B cell (primary cell): ENCODE measurements at regions of chr7 and their contacts with region 1.

Region 1: GRCh38 chr7:142782922-142783900 is 12.4 kb downstream of the PRSS2 start:
- DNase-seq: peak; percentile 93
- ATAC-seq: peak; percentile 90
- H3K4me3 ChIP-seq: peak overlapping the region; percentile 28 to 76 (median 56)
- H3K4me3 Mint-ChIP-seq: peak overlapping the region; percentile 81
- H3K27ac ChIP-seq: peak overlapping the region; percentile 27 to 56
- H3K27ac Mint-ChIP-seq: peak overlapping the region; percentile 92
- H3K4me1 ChIP-seq: peaks cover 14 to 25% of the 10 kb centered on the region in 2 donors
- H3K4me1 Mint-ChIP-seq: peaks cover 37% of the 10 kb centered on the region
- H3K27me3 ChIP-seq: no peaks in the 10 kb centered on the region
- H3K27me3 Mint-ChIP-seq: no peaks in the 10 kb centered on the region
- CTCF ChIP-seq: peak; percentile 91

Region 2: DNA sequence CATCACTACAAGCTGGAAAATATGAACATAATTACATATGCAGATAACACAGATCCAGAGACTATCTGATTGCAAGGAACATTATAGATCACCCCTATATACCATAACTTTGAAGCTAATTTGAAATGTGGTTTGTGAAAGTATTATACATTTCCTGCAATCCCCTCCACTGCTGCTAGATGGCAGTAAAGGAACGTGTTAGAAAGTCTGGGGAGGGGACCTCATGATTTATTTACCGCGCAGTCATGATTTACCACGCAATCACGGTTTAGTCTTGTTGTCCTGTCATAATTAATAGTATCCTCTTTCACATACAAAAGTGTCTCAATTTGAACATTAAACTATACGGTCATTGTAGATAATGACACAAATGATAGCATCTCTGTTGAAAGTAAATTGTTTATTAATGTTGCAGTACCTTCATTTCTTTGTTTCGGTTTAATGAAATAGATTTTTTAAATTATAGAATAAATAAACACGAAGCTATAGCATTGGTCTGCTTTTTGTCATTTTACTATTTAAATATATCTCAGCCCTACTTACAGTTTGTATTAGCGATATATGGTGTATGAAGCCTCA is 179.3 kb before region 1 on chr7:
- CTCF ChIA-PET with region 1: interaction called, 15 read pairs
- POLR2A ChIA-PET with region 1: no interaction called
- intact Hi-C with region 1: loop called (anchors 1 kb)
- DNase-seq: peak; percentile 72
- ATAC-seq: peak; percentile 63
- H3K4me3 ChIP-seq: no peak overlapping the region
- H3K4me3 Mint-ChIP-seq: no peak overlapping the region
- H3K27ac ChIP-seq: no peak overlapping the region
- H3K27ac Mint-ChIP-seq: no peak overlapping the region
- H3K4me1 ChIP-seq: no peaks in the 10 kb centered on the region
- H3K4me1 Mint-ChIP-seq: no peaks in the 10 kb centered on the region
- H3K27me3 ChIP-seq: peaks cover 0 to 2% (median 0%) of the 10 kb centered on the region in 4 experiments
- H3K27me3 Mint-ChIP-seq: peaks cover 32% of the 10 kb centered on the region
- CTCF ChIP-seq: peak; percentile 93

Region 3: DNA sequence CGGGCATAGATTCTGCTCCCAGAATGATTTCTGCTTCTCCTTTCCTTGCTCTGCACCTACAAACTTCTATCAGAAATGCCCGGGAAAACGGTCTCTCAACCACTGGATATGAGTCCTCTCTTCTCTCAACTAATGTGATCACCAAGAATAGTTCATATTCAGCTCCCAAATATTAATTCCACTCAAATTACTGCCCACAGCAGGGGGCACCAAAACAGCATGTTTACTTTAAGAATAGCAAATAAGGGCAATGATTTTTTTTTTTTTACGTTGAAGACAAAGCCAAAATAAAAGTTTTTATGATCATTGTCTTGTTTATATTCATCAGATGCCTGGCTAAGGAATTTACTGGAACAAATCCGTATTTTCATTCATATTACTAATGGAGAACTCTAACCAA is 128.8 kb before region 1 on chr7:
- CTCF ChIA-PET with region 1: interaction called, 16 read pairs
- POLR2A ChIA-PET with region 1: no interaction called
- intact Hi-C with region 1: loop called (anchors 1 kb)
- DNase-seq: no peak
- ATAC-seq: no peak
- H3K4me3 ChIP-seq: no peak overlapping the region
- H3K4me3 Mint-ChIP-seq: no peak overlapping the region
- H3K27ac ChIP-seq: no peak overlapping the region
- H3K27ac Mint-ChIP-seq: no peak overlapping the region
- H3K4me1 ChIP-seq: no peaks in the 10 kb centered on the region
- H3K4me1 Mint-ChIP-seq: no peaks in the 10 kb centered on the region
- H3K27me3 ChIP-seq: no peaks in the 10 kb centered on the region
- H3K27me3 Mint-ChIP-seq: peaks cover 30% of the 10 kb centered on the region
- CTCF ChIP-seq: peak; percentile 33

Region 4: DNA sequence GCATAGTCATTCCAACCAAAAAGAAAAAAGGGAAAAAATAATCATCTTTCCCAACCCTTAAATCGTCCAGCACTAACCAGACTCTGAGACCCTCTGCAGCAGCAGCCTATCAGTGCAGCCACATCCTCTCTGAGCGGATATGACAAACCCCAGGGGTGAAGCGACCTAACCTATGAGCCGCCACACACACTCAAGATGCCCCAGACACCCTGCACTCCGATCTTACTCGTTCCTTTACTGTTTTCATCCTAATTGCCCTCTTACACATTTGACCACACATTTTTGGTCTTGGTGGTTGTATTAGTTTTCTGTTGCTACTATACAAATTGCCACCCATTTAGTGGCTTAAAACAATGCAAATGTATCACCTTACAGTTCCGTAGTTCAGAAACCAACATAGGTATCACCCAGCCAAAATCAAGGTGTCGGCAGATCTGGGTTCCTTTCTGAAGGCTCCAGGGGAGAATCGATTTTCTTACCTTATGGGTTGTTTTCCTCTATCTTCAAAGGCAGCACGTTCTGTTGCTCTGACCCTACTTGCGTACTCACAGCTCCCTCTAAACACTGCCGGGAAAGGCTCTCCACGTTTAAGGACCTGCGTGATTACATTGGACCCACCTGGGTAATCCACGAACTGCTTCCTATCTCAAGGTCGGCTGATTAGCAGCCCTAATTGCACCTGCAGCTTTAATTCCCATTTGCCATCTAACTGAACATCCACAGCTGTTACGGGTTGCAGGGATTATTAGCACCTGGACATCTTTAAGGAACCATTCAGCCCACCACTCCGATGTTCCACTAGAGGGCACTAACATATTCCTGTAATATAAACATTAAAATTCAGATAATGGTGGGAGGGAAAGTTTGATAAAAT is 71.2 kb before region 1 on chr7:
- CTCF ChIA-PET with region 1: interaction called, 219 read pairs
- POLR2A ChIA-PET with region 1: interaction called, 16 read pairs
- intact Hi-C with region 1: loop called (anchors 1 kb)
- DNase-seq: peak; percentile 55
- ATAC-seq: peak; percentile 39
- H3K4me3 ChIP-seq: peak overlapping the region in 1 of 5 experiments; percentile 35
- H3K4me3 Mint-ChIP-seq: peak overlapping the region; percentile 66
- H3K27ac ChIP-seq: no peak overlapping the region
- H3K27ac Mint-ChIP-seq: peak overlapping the region; percentile 42
- H3K4me1 ChIP-seq: peaks cover 17 to 25% of the 10 kb centered on the region in 2 donors
- H3K4me1 Mint-ChIP-seq: peaks cover 24% of the 10 kb centered on the region
- H3K27me3 ChIP-seq: no peaks in the 10 kb centered on the region
- H3K27me3 Mint-ChIP-seq: peaks cover 4% of the 10 kb centered on the region
- CTCF ChIP-seq: peak; percentile 84

Region 5: GRCh38 chr7:142771353-142771723 is 11.9 kb before region 1 on chr7:
- CTCF ChIA-PET with region 1: interaction called, 41 read pairs
- POLR2A ChIA-PET with region 1: interaction called, 7 read pairs
- intact Hi-C with region 1: no loop called
- DNase-seq: peak; percentile 65
- ATAC-seq: peak; percentile 88
- H3K4me3 ChIP-seq: no peak overlapping the region
- H3K4me3 Mint-ChIP-seq: no peak overlapping the region
- H3K27ac ChIP-seq: no peak overlapping the region
- H3K27ac Mint-ChIP-seq: peak overlapping the region; percentile 73
- H3K4me1 ChIP-seq: peaks cover 9 to 21% of the 10 kb centered on the region in 2 donors
- H3K4me1 Mint-ChIP-seq: peaks cover 21% of the 10 kb centered on the region
- H3K27me3 ChIP-seq: peaks cover 0 to 3% (median 0%) of the 10 kb centered on the region in 4 experiments
- H3K27me3 Mint-ChIP-seq: peaks cover 7% of the 10 kb centered on the region
- CTCF ChIP-seq: no peak

Region 6: GRCh38 chr7:142833174-142834048 is 50.2 kb after region 1 on chr7:
- CTCF ChIA-PET with region 1: interaction called, 14 read pairs
- POLR2A ChIA-PET with region 1: no interaction called
- intact Hi-C with region 1: no loop called
- DNase-seq: no peak
- ATAC-seq: no peak
- H3K4me3 ChIP-seq: no peak overlapping the region
- H3K4me3 Mint-ChIP-seq: no peak overlapping the region
- H3K27ac ChIP-seq: no peak overlapping the region
- H3K27ac Mint-ChIP-seq: no peak overlapping the region
- H3K4me1 ChIP-seq: peaks cover 0 to 11% of the 10 kb centered on the region in 2 donors
- H3K4me1 Mint-ChIP-seq: peaks cover 28% of the 10 kb centered on the region
- H3K27me3 ChIP-seq: no peaks in the 10 kb centered on the region
- H3K27me3 Mint-ChIP-seq: no peaks in the 10 kb centered on the region
- CTCF ChIP-seq: no peak

Region 7: DNA sequence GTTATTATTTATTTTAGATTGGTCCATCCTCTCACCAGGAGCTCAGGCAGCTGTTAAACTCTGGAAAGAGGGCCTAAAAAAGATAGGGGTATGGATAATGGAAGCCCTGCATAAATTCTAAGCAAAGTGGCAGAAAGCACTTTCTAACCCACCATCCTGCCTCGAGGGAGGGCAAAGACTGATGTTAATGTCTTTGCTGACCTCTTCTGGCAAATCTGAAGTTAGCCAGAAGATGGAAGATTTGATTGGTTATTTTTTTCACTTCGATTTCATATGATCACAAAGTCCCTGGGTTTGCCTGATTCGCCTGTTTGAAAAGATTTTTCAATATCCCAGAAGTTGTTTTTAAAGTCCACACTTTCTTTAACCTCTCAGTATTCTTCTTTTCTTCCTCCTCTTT is 218.9 kb after region 1 on chr7:
- CTCF ChIA-PET with region 1: interaction called, 23 read pairs
- POLR2A ChIA-PET with region 1: no interaction called
- intact Hi-C with region 1: loop called (anchors 1 kb)
- DNase-seq: peak; percentile 42
- ATAC-seq: no peak
- H3K4me3 ChIP-seq: no peak overlapping the region
- H3K4me3 Mint-ChIP-seq: no peak overlapping the region
- H3K27ac ChIP-seq: no peak overlapping the region
- H3K27ac Mint-ChIP-seq: no peak overlapping the region
- H3K4me1 ChIP-seq: peaks cover 5 to 10% of the 10 kb centered on the region in 2 donors
- H3K4me1 Mint-ChIP-seq: peaks cover 7% of the 10 kb centered on the region
- H3K27me3 ChIP-seq: no peaks in the 10 kb centered on the region
- H3K27me3 Mint-ChIP-seq: no peaks in the 10 kb centered on the region
- CTCF ChIP-seq: peak; percentile 23